ENCODE measurements at regions of chr9 and their contacts with region 1.

Region 1: GRCh38 chr9:130847327-130848217 is 12.5 kb downstream of the ABL1 start:
- DNase-seq: peak in 1 of 4 experiments; percentile 66
- ATAC-seq: no peak
- H3K4me3 ChIP-seq: no peak overlapping the region
- H3K27ac ChIP-seq: no peak overlapping the region
- H3K4me1 ChIP-seq: peaks cover 26 to 29% of the 10 kb centered on the region in 2 experiments
- H3K27me3 ChIP-seq: no peaks in the 10 kb centered on the region
- CTCF ChIP-seq: no peak
- EP300 ChIP-seq: no peak
- POLR2A ChIP-seq: no peak
- RAD21 ChIP-seq: no peak

Region 2: DNA sequence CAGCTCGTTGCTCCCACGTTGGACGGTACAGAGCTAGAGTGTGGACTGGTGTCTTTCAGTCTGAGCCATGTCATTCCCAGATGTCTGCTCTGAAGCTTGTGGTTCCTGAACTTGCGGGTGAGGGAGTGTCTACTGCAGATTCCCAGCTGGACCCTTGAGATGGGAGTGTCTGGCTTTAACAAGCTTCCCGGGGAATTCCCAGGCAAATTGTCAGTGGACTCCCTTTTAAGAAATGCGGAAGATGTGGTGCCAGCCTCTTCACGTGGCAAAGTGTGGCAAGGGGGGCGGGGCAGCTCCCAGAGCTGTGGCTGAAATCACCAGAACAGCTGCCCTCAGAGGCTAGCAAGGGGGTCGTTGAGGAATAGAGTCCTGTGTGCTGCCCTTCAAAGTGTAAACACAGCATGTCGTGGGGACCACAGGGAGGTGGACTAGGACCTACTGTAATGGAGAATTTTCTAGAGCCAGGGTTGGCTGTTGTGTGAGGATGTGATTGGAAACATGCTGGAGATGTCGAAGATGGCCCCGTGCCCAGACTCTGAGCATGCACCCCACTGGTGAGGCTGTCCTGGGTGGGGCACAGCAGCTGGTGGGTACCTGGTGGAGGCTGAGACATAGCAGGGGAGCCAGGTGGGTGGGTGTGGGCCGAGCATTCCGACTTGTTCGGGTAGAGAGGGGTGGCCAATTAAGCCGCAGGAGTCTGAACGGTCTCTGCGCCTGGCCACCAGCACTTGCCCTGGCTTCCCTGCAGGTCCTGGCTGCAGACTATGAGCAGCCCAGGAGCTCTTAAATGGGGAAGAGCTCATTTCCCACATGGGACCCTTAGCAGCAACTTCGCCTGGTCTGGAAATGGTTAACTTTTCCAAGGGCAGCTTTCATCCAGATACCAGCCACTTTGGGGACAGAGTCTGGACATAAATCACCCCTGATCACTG is 1144.7 kb before region 1 on chr9:
- CTCF ChIA-PET with region 1: no interaction called
- POLR2A ChIA-PET with region 1: no interaction called
- in situ Hi-C with region 1: no loop called
- intact Hi-C with region 1: no loop called
- DNase-seq: no peak
- ATAC-seq: no peak
- H3K4me3 ChIP-seq: no peak overlapping the region
- H3K27ac ChIP-seq: no peak overlapping the region
- H3K4me1 ChIP-seq: peaks cover 0 to 8% of the 10 kb centered on the region in 2 experiments; a peak in 1 of 5 replicates
- H3K27me3 ChIP-seq: peaks cover 47 to 64% of the 10 kb centered on the region in 2 experiments
- CTCF ChIP-seq: no peak
- EP300 ChIP-seq: no peak
- POLR2A ChIP-seq: no peak
- RAD21 ChIP-seq: no peak

Region 3: DNA sequence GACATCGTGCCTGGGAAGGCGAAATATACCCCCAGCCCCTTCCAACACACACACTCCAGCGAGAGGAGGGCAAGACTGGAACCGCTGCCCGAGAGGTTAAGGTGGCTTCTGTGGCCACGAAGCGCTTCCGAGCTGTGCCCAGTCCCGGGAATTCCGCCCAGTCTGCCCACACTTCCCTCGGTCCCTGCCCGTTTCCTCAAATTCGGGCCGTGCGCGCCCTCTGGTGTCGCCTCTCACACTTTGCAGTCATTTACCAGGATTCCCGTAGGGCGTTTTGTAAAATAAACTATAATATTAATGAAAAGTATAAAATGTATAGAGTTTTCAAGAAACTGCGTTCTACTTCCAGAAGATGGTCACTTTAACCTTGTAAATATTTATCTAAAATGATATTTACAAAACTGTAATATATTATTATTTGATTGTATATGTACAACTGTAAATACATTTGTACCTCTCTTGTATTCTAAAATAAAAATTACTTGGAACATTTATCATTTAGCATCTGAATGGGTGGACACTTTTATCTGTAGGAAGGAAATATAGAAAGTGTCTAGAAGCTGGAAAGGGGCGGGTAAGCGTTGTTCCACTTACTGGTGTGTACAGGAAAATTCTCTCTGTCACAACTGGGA is 165.0 kb before region 1 on chr9:
- CTCF ChIA-PET with region 1: no interaction called
- POLR2A ChIA-PET with region 1: no interaction called
- in situ Hi-C with region 1: no loop called
- intact Hi-C with region 1: no loop called
- DNase-seq: peak; percentile 71 to 78 (median 76)
- ATAC-seq: peak; percentile 67
- H3K4me3 ChIP-seq: peak overlapping the region; percentile 66
- H3K27ac ChIP-seq: no peak overlapping the region
- H3K4me1 ChIP-seq: peaks cover 8 to 19% of the 10 kb centered on the region in 2 experiments; a peak in 4 of 5 replicates
- H3K27me3 ChIP-seq: peaks cover 2 to 15% of the 10 kb centered on the region in 2 experiments; a peak in 3 of 5 replicates
- CTCF ChIP-seq: peak; percentile 86 to 90 (median 88)
- EP300 ChIP-seq: no peak
- POLR2A ChIP-seq: no peak
- RAD21 ChIP-seq: peak; percentile 94 to 95

Region 4: DNA sequence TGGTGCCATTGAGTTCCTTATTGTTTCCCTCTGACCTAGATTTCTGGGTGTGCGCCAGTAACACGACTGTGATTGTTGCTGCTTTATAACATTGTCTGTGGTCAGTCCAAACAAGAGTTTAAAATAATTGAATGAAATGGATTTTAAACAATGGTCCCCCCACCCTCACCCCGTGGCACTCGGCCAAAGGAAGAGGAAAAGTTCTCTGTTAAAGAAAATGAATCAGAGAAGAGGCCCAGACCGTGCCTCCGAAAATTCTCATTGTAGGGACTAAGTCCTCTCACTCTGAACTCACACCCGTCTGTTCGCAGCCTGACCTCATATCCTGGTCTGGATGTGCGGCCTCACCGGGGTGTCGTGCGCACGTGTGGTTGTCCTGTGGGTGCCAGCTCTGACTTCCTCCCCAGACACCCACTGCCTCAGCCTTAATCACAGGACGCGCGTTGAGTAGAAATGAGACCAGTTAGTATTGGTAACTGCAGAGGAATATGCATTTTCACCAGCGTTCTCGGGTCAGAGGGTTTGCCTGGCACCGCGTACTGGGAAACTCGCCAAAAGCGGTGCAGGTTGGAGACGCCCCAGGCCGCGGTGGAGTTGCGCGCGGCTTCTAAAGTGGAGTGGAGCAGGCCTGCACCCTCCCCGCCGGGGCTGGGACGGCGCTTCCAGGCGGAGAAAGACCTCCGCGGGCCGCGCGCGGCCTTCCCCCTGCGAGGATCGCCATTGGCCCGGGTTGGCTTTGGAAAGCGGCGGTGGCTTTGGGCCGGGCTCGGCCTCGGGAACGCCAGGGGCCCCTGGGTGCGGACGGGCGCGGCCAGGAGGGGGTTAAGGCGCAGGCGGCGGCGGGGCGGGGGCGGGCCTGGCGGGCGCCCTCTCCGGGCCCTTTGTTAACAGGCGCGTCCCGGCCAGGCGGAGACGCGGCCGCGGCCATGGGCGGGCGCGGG is 12.9 kb before region 1 on chr9 and contains the start of gene ABL1:
- CTCF ChIA-PET with region 1: no interaction called
- POLR2A ChIA-PET with region 1: interaction called, 160 read pairs
- in situ Hi-C with region 1: no loop called
- intact Hi-C with region 1: no loop called
- DNase-seq: peak; percentile 70 to 94 (median 90)
- ATAC-seq: peak; percentile 63
- H3K4me3 ChIP-seq: peak within 1 kb of the TSS; percentile 17
- H3K27ac ChIP-seq: no peak within 1 kb of the TSS
- H3K4me1 ChIP-seq: peaks cover 0 to 11% of the 10 kb centered on the region in 2 experiments; a peak in 2 of 5 replicates
- H3K27me3 ChIP-seq: no peaks in the 10 kb centered on the region
- CTCF ChIP-seq: no peak
- EP300 ChIP-seq: no peak
- POLR2A ChIP-seq: no peak
- RAD21 ChIP-seq: no peak
- polyA plus RNA-seq, gene ABL1: 1.5 to 1.6 TPM